ENCODE measurements at regions of chr5 and their contacts with region 1.

Region 1: GRCh38 chr5:37370864-37371726 is at the start of gene NUP155:
- DNase-seq: peak; percentile 72 to 95 (median 87)
- ATAC-seq: peak; percentile 92 to 95 (median 92)
- H3K4me3 ChIP-seq: peak within 1 kb of the TSS; percentile 73 to 97
- H3K4me3 Mint-ChIP-seq: peak within 1 kb of the TSS; percentile 97 to 99 (median 98)
- H3K27ac ChIP-seq: peak within 1 kb of the TSS; percentile 91
- H3K27ac Mint-ChIP-seq: peak within 1 kb of the TSS; percentile 94 to 96
- H3K4me1 ChIP-seq: peaks cover 19 to 28% of the 10 kb centered on the region in 2 experiments
- H3K4me1 Mint-ChIP-seq: peaks cover 35 to 44% (median 40%) of the 10 kb centered on the region in 3 donors
- H3K27me3 ChIP-seq: no peaks in the 10 kb centered on the region
- H3K27me3 Mint-ChIP-seq: no peaks in the 10 kb centered on the region
- total RNA-seq, gene NUP155: 23.9 to 28.0 (median 25.7) TPM

Region 2: DNA sequence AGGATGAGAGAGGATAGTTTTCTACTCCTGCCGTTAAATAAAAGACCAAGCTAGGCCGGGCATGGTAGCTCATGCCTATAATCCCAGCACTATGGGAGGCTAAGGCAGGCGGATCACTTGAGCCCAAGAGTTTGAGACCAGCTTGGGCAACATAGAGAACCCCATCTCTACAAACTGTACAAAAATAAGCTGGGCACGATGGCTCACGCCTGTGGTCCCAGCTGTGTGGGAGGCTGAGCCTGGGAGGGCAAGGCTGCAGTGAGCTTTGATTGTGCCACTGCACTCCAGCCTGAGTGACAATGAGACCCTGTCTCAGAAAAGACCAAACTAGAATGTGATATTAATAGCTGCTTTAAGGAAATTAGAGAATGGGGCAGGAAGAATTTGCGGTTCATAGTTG is 336.1 kb before region 1 on chr5:
- CTCF ChIA-PET with region 1: no interaction called
- POLR2A ChIA-PET with region 1: interaction called in 1 of 2 experiments, 10 read pairs
- DNase-seq: no peak
- ATAC-seq: no peak
- H3K4me3 ChIP-seq: no peak overlapping the region
- H3K4me3 Mint-ChIP-seq: no peak overlapping the region
- H3K27ac ChIP-seq: no peak overlapping the region
- H3K27ac Mint-ChIP-seq: peak overlapping the region in 1 of 2 donors; percentile 22
- H3K4me1 ChIP-seq: no peaks in the 10 kb centered on the region
- H3K4me1 Mint-ChIP-seq: peaks cover 0 to 5% (median 2%) of the 10 kb centered on the region in 3 donors
- H3K27me3 ChIP-seq: no peaks in the 10 kb centered on the region
- H3K27me3 Mint-ChIP-seq: no peaks in the 10 kb centered on the region

Region 3: DNA sequence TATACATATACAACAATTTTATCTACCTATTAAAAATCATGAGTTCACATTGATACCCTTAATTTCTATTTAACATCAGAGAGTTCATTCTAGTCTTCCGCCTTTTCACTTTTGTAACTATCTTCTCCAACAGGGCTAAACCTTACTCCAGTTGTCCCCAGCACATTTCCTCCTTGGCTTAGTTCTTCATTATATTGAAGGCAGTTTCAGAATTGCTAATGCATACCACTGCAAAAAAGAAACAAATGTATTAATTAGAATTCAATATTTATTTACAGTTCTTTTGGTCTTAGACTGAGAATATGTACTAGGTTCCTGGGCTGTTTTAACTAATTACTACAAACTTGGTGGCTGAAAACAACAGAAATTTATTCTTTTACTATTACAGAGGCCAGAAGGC is 140.6 kb after region 1 on chr5:
- CTCF ChIA-PET with region 1: no interaction called
- POLR2A ChIA-PET with region 1: no interaction called
- DNase-seq: no peak
- ATAC-seq: no peak
- H3K4me3 ChIP-seq: no peak overlapping the region
- H3K4me3 Mint-ChIP-seq: no peak overlapping the region
- H3K27ac ChIP-seq: no peak overlapping the region
- H3K27ac Mint-ChIP-seq: no peak overlapping the region
- H3K4me1 ChIP-seq: no peaks in the 10 kb centered on the region
- H3K4me1 Mint-ChIP-seq: peaks cover 0 to 16% (median 5%) of the 10 kb centered on the region in 3 donors
- H3K27me3 ChIP-seq: no peaks in the 10 kb centered on the region
- H3K27me3 Mint-ChIP-seq: no peaks in the 10 kb centered on the region

Region 4: DNA sequence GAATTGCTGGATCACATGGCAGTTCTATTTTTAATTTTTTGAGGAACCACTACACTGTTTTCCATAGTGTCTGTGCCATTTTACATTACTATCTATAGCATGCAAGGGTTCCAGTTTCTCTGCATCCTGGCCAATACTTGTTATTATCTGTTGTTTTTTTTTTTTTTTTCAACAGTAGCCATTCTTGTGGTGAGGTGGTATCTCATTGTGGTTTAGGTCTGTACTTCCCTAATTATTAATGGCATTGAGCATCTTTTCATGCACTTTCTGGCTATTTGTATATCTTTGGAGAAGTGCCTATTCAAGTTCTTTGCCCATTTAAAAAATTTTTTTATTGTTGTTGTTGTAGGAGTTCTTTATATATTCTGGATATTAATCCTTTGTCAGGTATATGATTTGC is 371.0 kb after region 1 on chr5:
- CTCF ChIA-PET with region 1: no interaction called
- POLR2A ChIA-PET with region 1: no interaction called
- DNase-seq: no peak
- ATAC-seq: no peak
- H3K4me3 ChIP-seq: no peak overlapping the region
- H3K4me3 Mint-ChIP-seq: no peak overlapping the region
- H3K27ac ChIP-seq: no peak overlapping the region
- H3K27ac Mint-ChIP-seq: no peak overlapping the region
- H3K4me1 ChIP-seq: peaks cover 0 to 3% of the 10 kb centered on the region in 2 experiments
- H3K4me1 Mint-ChIP-seq: peaks cover 0 to 15% (median 11%) of the 10 kb centered on the region in 3 donors
- H3K27me3 ChIP-seq: no peaks in the 10 kb centered on the region
- H3K27me3 Mint-ChIP-seq: no peaks in the 10 kb centered on the region

Region 5: GRCh38 chr5:39072925-39073765 is 1702.0 kb after region 1 on chr5:
- CTCF ChIA-PET with region 1: no interaction called
- POLR2A ChIA-PET with region 1: interaction called in 1 of 2 experiments, 11 read pairs
- DNase-seq: peak; percentile 36 to 78 (median 52)
- ATAC-seq: peak; percentile 42 to 66 (median 49)
- H3K4me3 ChIP-seq: peak overlapping the region; percentile 83 to 88
- H3K4me3 Mint-ChIP-seq: peak overlapping the region; percentile 89 to 96 (median 96)
- H3K27ac ChIP-seq: peak overlapping the region; percentile 83
- H3K27ac Mint-ChIP-seq: peak overlapping the region; percentile 90 to 96
- H3K4me1 ChIP-seq: peaks cover 4 to 23% of the 10 kb centered on the region in 2 experiments
- H3K4me1 Mint-ChIP-seq: peaks cover 59 to 65% (median 62%) of the 10 kb centered on the region in 3 donors
- H3K27me3 ChIP-seq: no peaks in the 10 kb centered on the region
- H3K27me3 Mint-ChIP-seq: peaks cover 7 to 14% of the 10 kb centered on the region in 2 donors